A549 (cell line): ENCODE measurements at regions of chr7 and their contacts with region 1.

Region 1: GRCh38 chr7:12686894-12687717 is at the start of gene ARL4A:
- DNase-seq: peak; percentile 98
- ATAC-seq: peak; percentile 84 to 90
- H3K4me3 ChIP-seq: peak within 1 kb of the TSS; percentile 92
- H3K27ac ChIP-seq: peak within 1 kb of the TSS; percentile 98 to 99
- H3K4me1 ChIP-seq: peaks cover 42% of the 10 kb centered on the region; the same call in 2 of the 3 replicates
- CTCF ChIP-seq: peak; percentile 46
- EP300 ChIP-seq: no peak
- POLR2A ChIP-seq: peak; percentile 87
- RAD21 ChIP-seq: peak; percentile 79 to 94
- polyA plus RNA-seq, gene ARL4A: 58.9 and 76.1 TPM in 2 replicates

Region 2: DNA sequence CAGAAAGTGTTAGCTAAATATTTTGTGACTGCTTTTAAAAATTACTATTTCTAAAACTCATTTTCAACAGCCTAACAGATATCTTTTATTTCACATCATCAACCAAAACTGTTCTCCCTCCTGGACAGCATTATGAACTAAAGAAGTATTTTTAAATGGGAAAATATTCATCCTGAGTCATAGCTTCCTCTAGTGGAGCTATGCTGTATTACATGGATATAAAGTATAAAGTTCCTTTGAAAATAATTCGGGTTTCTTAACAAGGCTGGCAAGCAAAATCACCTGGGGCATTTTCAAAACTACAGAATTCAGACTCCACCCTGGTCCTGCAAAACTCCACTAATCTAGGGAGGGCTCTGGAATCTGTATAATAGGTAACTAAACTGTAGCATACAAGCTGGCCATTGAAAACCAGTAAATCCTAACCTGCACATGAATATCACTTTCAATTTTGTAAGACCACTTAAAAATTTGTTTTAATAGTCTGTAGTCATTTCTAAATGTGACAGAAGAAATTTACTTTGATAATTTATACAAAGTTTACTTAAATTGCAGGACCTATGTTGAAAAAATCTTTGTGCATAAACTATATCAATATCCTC is 63.1 kb before region 1 on chr7:
- CTCF ChIA-PET with region 1: interaction called, 12 read pairs
- POLR2A ChIA-PET with region 1: no interaction called
- DNase-seq: peak; percentile 21 to 35
- ATAC-seq: peak; percentile 34 to 68; a peak in 3 of 6 replicates
- H3K4me3 ChIP-seq: no peak overlapping the region
- H3K27ac ChIP-seq: no peak overlapping the region
- H3K4me1 ChIP-seq: peaks cover 6% of the 10 kb centered on the region; the same call in 2 of the 3 replicates
- CTCF ChIP-seq: peak; percentile 90
- EP300 ChIP-seq: no peak
- POLR2A ChIP-seq: no peak
- RAD21 ChIP-seq: peak; percentile 91 to 92

Region 3: DNA sequence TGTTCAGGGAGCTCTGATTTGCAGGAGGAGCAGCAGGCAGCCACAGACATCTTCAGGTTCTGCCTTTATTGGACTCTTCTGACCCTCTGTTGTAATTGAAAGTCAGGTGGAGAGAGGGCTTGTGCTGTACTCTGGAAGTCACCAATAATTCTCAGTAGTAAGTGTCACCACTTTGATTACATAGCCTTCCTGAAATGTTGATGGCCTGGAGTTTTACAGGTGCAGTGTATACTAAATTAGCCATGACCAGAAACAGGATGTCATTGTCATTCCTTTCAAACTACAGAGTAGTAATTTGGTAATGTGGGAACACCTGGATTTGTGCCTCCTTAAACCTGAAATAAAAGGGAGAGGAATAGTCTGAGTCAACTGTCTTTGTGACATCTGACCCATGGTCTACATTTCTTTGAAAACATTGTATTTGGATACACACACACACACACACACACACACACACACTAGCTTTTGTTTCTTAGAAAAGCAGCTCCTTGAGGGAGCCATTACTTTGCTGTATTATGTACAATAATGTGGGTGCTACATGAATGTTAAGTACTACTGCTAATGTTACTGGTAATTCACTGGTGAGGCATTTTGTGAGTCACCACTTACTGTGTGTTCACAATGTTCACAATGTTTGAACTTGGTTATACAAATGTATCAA is 19.9 kb after region 1 on chr7:
- CTCF ChIA-PET with region 1: interaction called, 49 read pairs
- POLR2A ChIA-PET with region 1: interaction called, 23 read pairs
- DNase-seq: peak in 1 of 2 experiments; percentile 59
- ATAC-seq: peak; percentile 74 to 81; a peak in 5 of 6 replicates
- H3K4me3 ChIP-seq: no peak overlapping the region
- H3K27ac ChIP-seq: peak overlapping the region; percentile 76 to 96
- H3K4me1 ChIP-seq: peaks cover 56% of the 10 kb centered on the region
- CTCF ChIP-seq: no peak
- EP300 ChIP-seq: no peak
- POLR2A ChIP-seq: no peak
- RAD21 ChIP-seq: no peak

Region 4: GRCh38 chr7:12921751-12922345 is 234.7 kb after region 1 on chr7:
- CTCF ChIA-PET with region 1: interaction called, 12 read pairs
- POLR2A ChIA-PET with region 1: no interaction called
- DNase-seq: peak in 1 of 2 experiments; percentile 40
- ATAC-seq: peak in 1 of 2 experiments; percentile 68; a peak in 4 of 6 replicates
- H3K4me3 ChIP-seq: no peak overlapping the region
- H3K27ac ChIP-seq: no peak overlapping the region; a peak in 1 of 6 replicates
- H3K4me1 ChIP-seq: peaks cover 12% of the 10 kb centered on the region; the same call in 2 of the 3 replicates
- CTCF ChIP-seq: no peak
- EP300 ChIP-seq: no peak
- POLR2A ChIP-seq: no peak
- RAD21 ChIP-seq: no peak

Region 5: DNA sequence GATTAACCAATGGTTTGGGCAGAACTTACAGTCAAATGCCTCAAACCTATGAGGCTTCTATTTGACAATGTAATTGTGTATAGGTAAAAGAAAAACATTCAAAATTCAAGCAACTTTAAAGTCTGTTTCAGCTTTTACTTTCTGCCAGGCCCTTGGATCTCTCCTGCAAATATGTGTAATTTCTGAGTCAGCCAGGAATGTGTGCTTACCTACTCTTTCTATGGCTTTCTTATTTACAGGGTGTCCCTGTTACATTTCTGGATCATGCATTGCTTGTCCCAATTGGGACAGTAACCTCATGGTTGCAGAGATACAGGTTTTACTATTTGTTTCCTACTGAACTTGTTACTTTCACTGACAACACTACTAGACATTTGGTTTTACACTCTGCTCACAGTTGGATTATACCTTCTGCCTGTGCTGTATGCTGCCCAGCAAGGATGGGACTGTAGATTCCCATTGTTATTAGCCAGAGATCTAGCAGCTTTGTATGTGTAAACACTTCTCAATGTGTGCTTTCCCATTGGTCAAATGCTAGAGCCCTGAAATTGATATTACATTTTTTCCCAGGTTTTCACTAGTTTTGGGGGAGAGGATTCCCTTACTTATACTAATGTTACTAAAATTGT is 355.6 kb after region 1 on chr7:
- CTCF ChIA-PET with region 1: interaction called, 25 read pairs
- POLR2A ChIA-PET with region 1: interaction called, 21 read pairs
- DNase-seq: peak; percentile 34 to 68
- ATAC-seq: peak; percentile 86 to 92
- H3K4me3 ChIP-seq: 0 out of 3 replicates have a peak overlapping the region, but pooled peaks have one; percentile 30
- H3K27ac ChIP-seq: peak overlapping the region; percentile 76 to 86
- H3K4me1 ChIP-seq: peaks cover 60% of the 10 kb centered on the region
- CTCF ChIP-seq: no peak
- EP300 ChIP-seq: peak in 1 of 2 experiments; percentile 41; a peak in 1 of 5 replicates
- POLR2A ChIP-seq: no peak
- RAD21 ChIP-seq: peak in 1 of 2 experiments; percentile 23; a peak in 3 of 5 replicates

Region 6: GRCh38 chr7:13159467-13160184 is 472.5 kb after region 1 on chr7:
- CTCF ChIA-PET with region 1: interaction called, 13 read pairs
- POLR2A ChIA-PET with region 1: no interaction called
- DNase-seq: no peak
- ATAC-seq: no peak
- H3K4me3 ChIP-seq: no peak overlapping the region
- H3K27ac ChIP-seq: no peak overlapping the region
- H3K4me1 ChIP-seq: 0 out of 3 replicates have a peak, but pooled peaks cover 4% of the 10 kb centered on the region
- CTCF ChIP-seq: no peak
- EP300 ChIP-seq: no peak
- POLR2A ChIP-seq: no peak
- RAD21 ChIP-seq: no peak

Region 7: DNA sequence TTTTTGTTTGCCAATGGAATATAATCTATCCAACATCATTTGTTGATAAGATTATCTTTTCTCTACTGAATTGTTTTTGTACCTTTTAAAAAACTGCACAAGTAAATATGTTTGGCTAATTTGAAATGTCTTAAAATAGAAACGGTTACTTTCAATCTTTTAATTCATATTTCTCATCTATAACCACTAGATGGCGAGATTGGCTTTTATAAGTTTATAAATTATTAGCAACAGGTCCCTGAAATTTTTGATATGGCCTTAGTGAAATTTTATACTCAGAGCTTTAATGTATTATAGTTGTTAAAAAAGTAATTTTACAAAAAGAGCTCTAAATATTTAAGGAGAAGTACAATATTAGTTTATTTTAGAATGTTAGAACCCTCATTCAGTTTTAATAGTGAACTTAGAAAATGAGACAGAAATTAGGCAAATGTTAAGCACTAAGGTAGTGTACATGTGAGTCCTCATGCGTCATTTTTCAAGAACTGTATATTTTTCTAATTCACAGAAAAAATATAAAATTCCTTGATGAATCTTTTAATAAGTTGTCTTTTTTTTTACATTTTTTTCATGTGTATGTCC is 592.8 kb after region 1 on chr7:
- CTCF ChIA-PET with region 1: interaction called, 18 read pairs
- POLR2A ChIA-PET with region 1: no interaction called
- DNase-seq: peak in 1 of 2 experiments; percentile 33
- ATAC-seq: no peak
- H3K4me3 ChIP-seq: no peak overlapping the region
- H3K27ac ChIP-seq: no peak overlapping the region
- H3K4me1 ChIP-seq: no peaks in the 10 kb centered on the region
- CTCF ChIP-seq: peak; percentile 53
- EP300 ChIP-seq: no peak
- POLR2A ChIP-seq: no peak
- RAD21 ChIP-seq: peak; percentile 56 to 76